Mammary epithelial cell (primary cell): ENCODE measurements at regions of chr7 and their contacts with region 1.

Region 1: GRCh38 chr7:101058355-101058754 is 26.9 kb upstream of the TRIM56 start:
- DNase-seq: peak; percentile 8
- H3K4me3 ChIP-seq: no peak overlapping the region
- H3K27ac ChIP-seq: no peak overlapping the region
- H3K4me1 ChIP-seq: no peaks in the 10 kb centered on the region
- H3K27me3 ChIP-seq: peaks cover 2% of the 10 kb centered on the region
- CTCF ChIP-seq: no peak

Region 2: DNA sequence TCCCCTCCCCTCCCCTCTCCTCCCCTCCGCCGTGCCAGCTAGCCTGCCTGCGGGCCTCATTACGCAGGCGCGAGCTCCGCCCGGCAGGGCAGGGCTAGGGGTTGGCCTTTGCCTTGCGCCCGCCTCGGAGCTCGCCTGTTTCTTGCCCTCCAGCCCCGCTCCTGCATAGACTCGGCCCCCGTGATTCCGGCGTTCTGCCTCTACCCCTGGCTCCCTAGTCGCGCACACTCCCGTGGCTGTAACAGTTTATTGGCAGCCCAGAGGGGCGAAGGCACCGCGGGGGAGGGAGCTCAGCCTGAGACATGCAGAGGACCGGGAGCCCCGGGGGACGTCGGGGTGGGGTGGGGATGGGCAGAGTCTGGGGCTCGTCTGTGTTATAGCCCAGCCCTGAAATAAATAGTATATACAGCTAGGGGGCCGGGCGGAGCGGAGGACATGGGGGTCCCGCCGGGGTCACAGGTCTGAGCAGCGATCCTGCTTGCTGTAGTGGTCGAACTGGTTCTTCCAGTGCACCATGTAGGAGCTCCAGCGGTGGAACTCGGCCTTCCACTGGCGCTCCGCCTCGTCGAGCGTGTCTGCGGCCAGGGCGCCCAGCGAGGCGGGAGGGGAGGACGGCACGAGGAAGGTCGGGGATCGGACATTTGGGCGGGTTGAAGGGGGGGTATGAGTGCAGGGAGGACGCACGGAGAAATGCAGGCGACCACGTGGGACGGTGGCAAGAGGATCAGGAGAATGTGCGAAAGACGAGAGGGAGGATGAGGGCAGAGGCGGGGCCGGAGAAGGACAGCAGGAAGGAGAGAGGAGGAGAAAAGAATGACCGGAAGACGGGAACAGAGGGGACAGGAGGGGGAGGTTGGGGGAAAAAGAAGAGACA is 168.4 kb before region 1 on chr7:
- CTCF ChIA-PET with region 1: interaction called, 9 read pairs
- dilution Hi-C with region 1: no loop called
- in situ Hi-C with region 1: no loop called
- intact Hi-C with region 1: loop called (anchors 1 kb)
- DNase-seq: peak; percentile 90
- H3K4me3 ChIP-seq: peak overlapping the region; percentile 50 to 79 (median 51)
- H3K27ac ChIP-seq: peak overlapping the region; percentile 29
- H3K4me1 ChIP-seq: peaks cover 36% of the 10 kb centered on the region
- H3K27me3 ChIP-seq: no peaks in the 10 kb centered on the region
- CTCF ChIP-seq: no peak

Region 3: GRCh38 chr7:100942045-100942768 is 116.1 kb before region 1 on chr7:
- CTCF ChIA-PET with region 1: no interaction called
- dilution Hi-C with region 1: loop called (anchors 5 kb)
- in situ Hi-C with region 1: no loop called
- intact Hi-C with region 1: no loop called
- DNase-seq: no peak
- H3K4me3 ChIP-seq: no peak overlapping the region
- H3K27ac ChIP-seq: no peak overlapping the region
- H3K4me1 ChIP-seq: no peaks in the 10 kb centered on the region
- H3K27me3 ChIP-seq: no peaks in the 10 kb centered on the region
- CTCF ChIP-seq: no peak

Region 4: GRCh38 chr7:100983451-100984187 is 74.7 kb before region 1 on chr7:
- CTCF ChIA-PET with region 1: no interaction called
- dilution Hi-C with region 1: loop called (anchors 10 kb)
- in situ Hi-C with region 1: no loop called
- intact Hi-C with region 1: no loop called
- DNase-seq: peak; percentile 93
- H3K4me3 ChIP-seq: no peak overlapping the region
- H3K27ac ChIP-seq: peak overlapping the region; percentile 57
- H3K4me1 ChIP-seq: no peaks in the 10 kb centered on the region
- H3K27me3 ChIP-seq: no peaks in the 10 kb centered on the region
- CTCF ChIP-seq: no peak

Region 5: DNA sequence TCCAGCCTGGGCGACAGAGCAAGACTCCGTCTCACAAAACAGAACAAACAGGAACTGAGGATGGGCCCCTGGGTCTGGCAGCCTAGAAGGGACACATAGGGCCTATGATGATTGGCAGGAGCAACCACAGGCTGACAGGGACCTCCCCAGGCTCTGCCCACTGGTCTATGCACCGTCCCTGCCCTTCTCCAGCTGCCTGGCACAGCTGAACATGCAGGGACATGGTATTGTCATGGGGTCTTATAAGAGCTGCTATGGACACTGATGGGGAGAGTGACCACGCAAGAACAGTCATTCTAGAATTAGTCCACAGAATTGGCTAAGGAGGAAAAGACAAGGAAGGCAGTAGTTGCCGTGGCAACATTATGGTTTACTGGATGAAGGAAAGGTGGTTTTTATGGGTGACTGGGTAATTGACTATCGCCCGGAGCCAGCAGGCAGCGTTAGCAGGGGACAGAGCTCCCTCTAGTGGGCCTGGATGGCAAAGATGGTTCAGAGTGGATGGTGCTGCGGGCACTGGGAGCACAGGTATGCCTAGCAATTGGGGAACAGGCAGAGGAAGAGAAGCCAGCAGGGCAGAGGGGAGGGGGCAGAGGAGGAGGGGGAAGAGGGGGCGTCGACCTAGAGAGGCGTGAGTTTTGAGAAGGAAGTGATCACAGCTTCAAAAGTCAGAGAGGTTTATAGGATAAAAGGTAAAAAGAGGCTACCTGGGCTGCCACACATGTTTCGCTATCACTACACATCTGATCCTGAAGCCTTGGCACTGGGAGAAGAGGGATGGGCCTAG is 19.1 kb after region 1 on chr7:
- CTCF ChIA-PET with region 1: interaction called, 5 read pairs
- dilution Hi-C with region 1: no loop called
- in situ Hi-C with region 1: no loop called
- intact Hi-C with region 1: loop called (anchors 1 kb)
- DNase-seq: peak; percentile 82
- H3K4me3 ChIP-seq: no peak overlapping the region
- H3K27ac ChIP-seq: no peak overlapping the region
- H3K4me1 ChIP-seq: no peaks in the 10 kb centered on the region
- H3K27me3 ChIP-seq: peaks cover 2% of the 10 kb centered on the region
- CTCF ChIP-seq: peak; percentile 86 to 98